ENCODE measurements at regions of chr3 and their contacts with region 1.

Region 1: GRCh38 chr3:7307410-7307809 is 446.5 kb downstream of the GRM7 start:
- DNase-seq: peak; percentile 81 to 95 (median 87)
- H3K4me3 ChIP-seq: peak overlapping the region in 5 of 7 experiments; percentile 2 to 56 (median 26)
- H3K27ac ChIP-seq: peak overlapping the region; percentile 61 to 78
- H3K4me1 ChIP-seq: peaks cover 27 to 52% (median 46%) of the 10 kb centered on the region in 4 experiments
- H3K27me3 ChIP-seq: no peaks in the 10 kb centered on the region

Region 2: GRCh38 chr3:7280318-7280717 is 27.1 kb before region 1 on chr3:
- CTCF ChIA-PET with region 1: no interaction called
- POLR2A ChIA-PET with region 1: no interaction called
- DNase-seq: no peak
- H3K4me3 ChIP-seq: no peak overlapping the region
- H3K27ac ChIP-seq: no peak overlapping the region
- H3K4me1 ChIP-seq: no peaks in the 10 kb centered on the region
- H3K27me3 ChIP-seq: no peaks in the 10 kb centered on the region

Region 3: DNA sequence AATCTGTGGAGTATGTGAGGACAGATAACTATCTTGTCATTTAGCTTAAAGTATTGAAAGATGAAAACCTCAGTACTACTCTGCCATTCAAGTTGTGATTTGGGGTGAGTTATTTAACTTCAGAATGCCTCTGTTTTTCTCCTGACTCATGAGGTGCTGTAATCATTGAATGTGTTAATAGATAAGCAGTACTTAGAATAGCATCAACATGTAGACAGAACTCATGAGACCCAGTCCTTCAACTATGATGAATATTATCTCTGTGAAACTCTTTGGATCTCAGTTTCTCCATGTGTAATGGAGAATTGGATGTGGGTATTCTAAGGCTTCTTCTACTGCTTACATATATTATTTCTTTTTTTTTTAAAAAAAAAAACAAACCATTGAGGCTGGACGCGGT is 15.0 kb before region 1 on chr3:
- CTCF ChIA-PET with region 1: interaction called, 12 read pairs
- POLR2A ChIA-PET with region 1: no interaction called
- DNase-seq: peak in 1 of 3 donors; percentile 22
- H3K4me3 ChIP-seq: no peak overlapping the region
- H3K27ac ChIP-seq: no peak overlapping the region
- H3K4me1 ChIP-seq: peaks cover 8 to 23% (median 18%) of the 10 kb centered on the region in 4 experiments
- H3K27me3 ChIP-seq: no peaks in the 10 kb centered on the region

Measured in common myeloid progenitor, CD34-positive (primary cell).